Activated naive CD4-positive, alpha-beta T cell treated with anti-CD3 and anti-CD28 coated beads for 36 hours (primary cell): ENCODE measurements at regions of chr9 and their contacts with region 1.

Region 1: DNA sequence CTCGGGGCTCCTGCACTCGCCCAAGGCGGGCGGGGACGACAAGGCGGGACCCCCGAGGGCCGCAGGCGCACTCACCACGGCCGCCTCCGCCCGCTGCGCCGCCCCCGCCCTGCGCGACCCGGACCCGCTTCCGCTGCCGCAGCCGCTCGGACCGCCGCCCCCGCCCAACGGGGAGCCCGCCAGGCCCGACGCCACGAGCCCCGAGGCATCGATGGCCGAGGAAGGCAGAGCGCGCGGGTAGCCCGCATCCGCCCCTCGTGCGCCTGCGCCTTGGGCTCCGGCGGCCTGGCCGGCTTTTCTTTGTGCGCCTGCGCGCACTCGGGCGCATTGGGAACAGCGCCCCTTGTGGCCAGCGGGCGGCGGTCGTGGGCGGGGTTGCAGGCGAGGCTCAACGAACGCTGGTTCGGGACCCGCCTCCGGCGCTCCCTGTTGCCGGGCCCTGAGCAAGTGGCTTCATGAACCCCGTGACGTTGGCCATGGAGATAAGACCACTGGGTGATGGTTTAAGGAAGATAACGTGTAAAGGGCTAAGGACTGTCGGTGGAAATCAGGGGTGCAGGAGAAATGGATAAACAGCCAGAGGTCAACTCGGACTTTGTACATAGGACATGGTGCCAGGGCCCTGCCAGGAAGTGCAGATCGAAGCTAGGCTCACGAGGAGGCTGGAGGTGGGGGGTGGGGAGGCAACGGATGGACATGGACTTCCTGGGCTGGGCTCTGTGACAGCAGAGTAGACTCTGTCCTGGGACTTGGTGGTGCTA is at the starts of genes C8G and FBXW5:
- DNase-seq: peak; percentile 94
- H3K4me3 Mint-ChIP-seq: peak within 1 kb of the TSS; percentile 77
- H3K27ac Mint-ChIP-seq: peak within 1 kb of the TSS; percentile 81
- H3K4me1 Mint-ChIP-seq: peaks cover 9% of the 10 kb centered on the region
- H3K27me3 Mint-ChIP-seq: no peaks in the 10 kb centered on the region
- total RNA-seq, gene C8G: 0.83 TPM in 1 of 2 experiments, not detected in the other
- total RNA-seq, gene FBXW5: 44.0 to 47.8 TPM

Region 2: DNA sequence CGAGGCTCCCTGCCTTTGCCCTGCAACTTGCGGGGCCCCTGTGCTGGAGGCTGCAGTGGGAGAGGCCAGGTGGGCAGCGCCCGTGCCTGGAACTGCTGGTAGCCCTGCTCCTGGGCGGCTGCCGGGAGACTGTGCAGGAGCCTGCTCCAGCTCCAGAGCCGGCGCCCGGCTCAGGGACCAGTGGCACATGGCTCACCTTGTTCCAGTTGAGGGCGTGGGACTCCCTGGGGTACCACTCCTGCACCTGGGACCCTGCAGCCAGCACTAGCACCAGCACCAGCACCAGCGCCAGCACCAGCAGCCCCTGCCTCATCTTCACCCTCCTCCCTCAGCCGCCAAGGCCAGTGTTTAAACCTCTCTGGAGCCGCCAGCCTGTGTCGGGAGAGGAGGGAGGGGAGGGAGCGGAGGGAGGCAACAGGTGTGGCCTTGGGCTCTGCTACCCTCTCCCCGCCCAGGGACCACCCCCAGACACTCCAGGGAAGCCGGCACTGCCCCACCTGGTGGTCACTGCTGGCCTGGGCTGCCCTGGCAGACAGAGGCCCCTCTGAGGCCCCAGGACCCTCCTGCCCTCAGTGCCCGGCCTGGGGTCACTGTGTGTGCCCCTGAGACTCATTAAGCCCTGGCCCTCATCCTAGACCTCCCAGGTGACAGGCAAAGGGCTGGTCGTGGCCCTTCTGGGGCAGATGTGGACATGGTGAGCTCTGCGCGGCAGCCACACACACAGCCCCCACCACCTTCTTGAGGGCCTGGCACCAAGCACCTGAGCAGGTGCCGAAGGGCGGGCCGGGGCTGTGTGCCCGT is 201.9 kb before region 1 on chr9 and contains the start of gene LCN10:
- CTCF ChIA-PET with region 1: no interaction called
- intact Hi-C with region 1: no loop called
- DNase-seq: no peak
- H3K4me3 Mint-ChIP-seq: peak within 1 kb of the TSS; percentile 61
- H3K27ac Mint-ChIP-seq: no peak within 1 kb of the TSS
- H3K4me1 Mint-ChIP-seq: peaks cover 18% of the 10 kb centered on the region
- H3K27me3 Mint-ChIP-seq: no peaks in the 10 kb centered on the region
- total RNA-seq, gene LCN10: 0.83 to 1.0 TPM

Region 3: GRCh38 chr9:136865735-136866103 is 79.0 kb before region 1 on chr9:
- CTCF ChIA-PET with region 1: no interaction called
- intact Hi-C with region 1: no loop called
- DNase-seq: no peak
- H3K4me3 Mint-ChIP-seq: peak overlapping the region; percentile 87
- H3K27ac Mint-ChIP-seq: peak overlapping the region; percentile 69
- H3K4me1 Mint-ChIP-seq: peaks cover 20% of the 10 kb centered on the region
- H3K27me3 Mint-ChIP-seq: no peaks in the 10 kb centered on the region

Region 4: GRCh38 chr9:137086531-137087408 is 142.1 kb after region 1 on chr9 and contains the start of gene MAN1B1:
- CTCF ChIA-PET with region 1: interaction called, 4 read pairs
- intact Hi-C with region 1: loop called (anchors 1 kb)
- DNase-seq: peak; percentile 100
- H3K4me3 Mint-ChIP-seq: peak within 1 kb of the TSS; percentile 89
- H3K27ac Mint-ChIP-seq: peak within 1 kb of the TSS; percentile 89
- H3K4me1 Mint-ChIP-seq: peaks cover 36% of the 10 kb centered on the region
- H3K27me3 Mint-ChIP-seq: no peaks in the 10 kb centered on the region
- total RNA-seq, gene MAN1B1: 18.7 to 18.9 TPM